ENCODE measurements at regions of chr12 and their contacts with region 1.

Region 1: GRCh38 chr12:63151623-63152320 is 771 bp upstream of the AVPR1A start:
- DNase-seq: peak; percentile 47 to 82 (median 62)
- H3K4me3 ChIP-seq: peak overlapping the region in 3 of 4 donors; percentile 34 to 60 (median 44)
- H3K27ac ChIP-seq: peak overlapping the region in 3 of 5 donors; percentile 43 to 64 (median 62)
- H3K4me1 ChIP-seq: peaks cover 7 to 10% of the 10 kb centered on the region in 2 donors
- H3K27me3 ChIP-seq: peaks cover 4% of the 10 kb centered on the region
- CTCF ChIP-seq: peak; percentile 79 to 87 (median 82)
- POLR2A ChIP-seq: peak in 1 of 2 donors; percentile 5

Region 2: DNA sequence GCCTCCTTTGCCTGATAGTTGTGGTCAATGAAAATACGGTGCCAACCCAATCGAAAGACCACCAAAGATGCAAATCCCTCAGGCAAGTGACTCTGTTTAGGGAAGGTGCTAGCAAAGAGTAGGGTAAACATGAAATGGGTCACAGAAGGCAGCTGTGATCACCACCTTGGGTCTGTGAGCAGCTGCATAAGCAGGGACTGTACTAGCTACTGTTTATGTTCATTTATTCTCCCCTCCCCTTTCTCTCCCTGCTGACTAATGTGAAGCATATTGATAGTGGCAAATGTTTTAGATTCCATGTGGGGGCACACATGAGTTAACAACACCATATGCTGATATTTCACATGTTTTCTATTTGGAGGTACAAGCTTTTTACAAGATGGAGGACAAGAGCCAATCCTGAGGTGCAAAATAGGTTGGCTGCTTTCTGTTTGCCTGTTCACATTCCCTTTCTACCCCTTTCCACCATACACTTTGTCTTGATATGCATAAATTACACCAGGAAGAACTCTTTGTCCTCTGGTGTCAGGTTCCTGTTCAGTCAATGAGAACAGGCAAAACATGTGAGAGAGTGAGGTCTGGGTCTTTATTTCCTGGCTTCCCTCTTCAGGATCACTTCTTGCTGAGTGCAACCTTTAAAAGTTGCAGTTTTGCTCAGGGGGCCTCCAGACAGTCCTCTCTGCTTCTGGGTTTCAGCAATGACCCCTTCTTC is 71.8 kb before region 1 on chr12:
- intact Hi-C with region 1: no loop called
- DNase-seq: no peak
- H3K4me3 ChIP-seq: no peak overlapping the region
- H3K27ac ChIP-seq: no peak overlapping the region
- H3K4me1 ChIP-seq: no peaks in the 10 kb centered on the region
- H3K27me3 ChIP-seq: no peaks in the 10 kb centered on the region
- CTCF ChIP-seq: no peak
- POLR2A ChIP-seq: no peak

Region 3: DNA sequence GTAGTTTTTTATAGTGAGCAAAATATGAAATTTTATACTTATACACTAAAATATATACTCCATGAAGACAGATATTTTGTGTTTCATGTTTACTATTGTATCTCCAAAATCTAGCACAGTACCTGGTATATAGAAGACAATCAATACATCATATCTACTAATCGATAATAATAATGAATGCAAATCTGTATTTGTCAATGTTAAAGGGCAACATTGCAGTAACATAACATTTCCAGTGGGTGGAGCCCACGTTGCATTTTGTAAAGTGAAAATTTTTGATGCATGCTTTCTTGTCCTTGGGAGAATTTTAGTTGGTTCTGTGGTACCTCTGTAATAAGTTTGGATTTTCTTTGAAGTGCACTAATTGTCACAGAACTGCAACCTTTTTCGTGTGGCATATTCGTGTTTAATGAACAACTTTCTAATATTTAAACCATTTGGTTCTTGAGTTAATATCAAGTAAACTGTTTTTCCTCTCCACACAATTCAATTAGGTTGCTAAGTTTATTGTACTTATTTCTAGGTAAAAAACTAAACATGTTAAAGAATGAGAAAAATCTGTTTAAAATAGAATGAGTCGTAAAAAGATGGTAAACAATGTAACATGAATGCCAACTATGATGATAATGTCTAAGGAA is 48.2 kb before region 1 on chr12:
- intact Hi-C with region 1: loop called in 1 of 2 experiments (anchors 5 kb)
- DNase-seq: peak in 1 of 7 donors; percentile 15
- H3K4me3 ChIP-seq: no peak overlapping the region
- H3K27ac ChIP-seq: no peak overlapping the region
- H3K4me1 ChIP-seq: no peaks in the 10 kb centered on the region
- H3K27me3 ChIP-seq: no peaks in the 10 kb centered on the region
- CTCF ChIP-seq: peak; percentile 54 to 92 (median 82)
- POLR2A ChIP-seq: no peak

Region 4: GRCh38 chr12:63276537-63277365 is 125.0 kb after region 1 on chr12:
- intact Hi-C with region 1: loop called in 1 of 2 experiments (anchors 5 kb)
- DNase-seq: peak; percentile 60 to 87 (median 68)
- H3K4me3 ChIP-seq: peak overlapping the region in 1 of 4 donors; percentile 13
- H3K27ac ChIP-seq: no peak overlapping the region
- H3K4me1 ChIP-seq: no peaks in the 10 kb centered on the region
- H3K27me3 ChIP-seq: no peaks in the 10 kb centered on the region
- CTCF ChIP-seq: peak; percentile 62 to 93 (median 78)
- POLR2A ChIP-seq: no peak

Measured in adrenal gland (tissue), 19 donors.